Aorta (tissue), 5 donors: ENCODE measurements at regions of chr1 and their contacts with region 1.

Region 1: GRCh38 chr1:161367684-161368400 is at the start of gene CFAP126:
- DNase-seq: peak in 1 of 2 donors; percentile 84
- ATAC-seq: peak; percentile 92
- H3K4me3 ChIP-seq: no peak within 1 kb of the TSS
- H3K27ac ChIP-seq: peak within 1 kb of the TSS; percentile 67 to 79
- H3K4me1 ChIP-seq: no peaks in the 10 kb centered on the region
- H3K27me3 ChIP-seq: no peaks in the 10 kb centered on the region
- total RNA-seq, gene CFAP126: not detected

Region 2: GRCh38 chr1:161225534-161226319 is 142.1 kb before region 1 on chr1 and contains the start of gene TOMM40L:
- intact Hi-C with region 1: loop called (anchors 5 kb)
- DNase-seq: peak; percentile 91 to 95
- ATAC-seq: peak; percentile 95
- H3K4me3 ChIP-seq: peak within 1 kb of the TSS; percentile 47 to 85
- H3K27ac ChIP-seq: no peak within 1 kb of the TSS
- H3K4me1 ChIP-seq: no peaks in the 10 kb centered on the region
- H3K27me3 ChIP-seq: no peaks in the 10 kb centered on the region
- total RNA-seq, gene TOMM40L: 10.0 to 12.9 TPM